Mammary epithelial cell (primary cell): ENCODE measurements at regions of chr4 and their contacts with region 1.

Region 1: DNA sequence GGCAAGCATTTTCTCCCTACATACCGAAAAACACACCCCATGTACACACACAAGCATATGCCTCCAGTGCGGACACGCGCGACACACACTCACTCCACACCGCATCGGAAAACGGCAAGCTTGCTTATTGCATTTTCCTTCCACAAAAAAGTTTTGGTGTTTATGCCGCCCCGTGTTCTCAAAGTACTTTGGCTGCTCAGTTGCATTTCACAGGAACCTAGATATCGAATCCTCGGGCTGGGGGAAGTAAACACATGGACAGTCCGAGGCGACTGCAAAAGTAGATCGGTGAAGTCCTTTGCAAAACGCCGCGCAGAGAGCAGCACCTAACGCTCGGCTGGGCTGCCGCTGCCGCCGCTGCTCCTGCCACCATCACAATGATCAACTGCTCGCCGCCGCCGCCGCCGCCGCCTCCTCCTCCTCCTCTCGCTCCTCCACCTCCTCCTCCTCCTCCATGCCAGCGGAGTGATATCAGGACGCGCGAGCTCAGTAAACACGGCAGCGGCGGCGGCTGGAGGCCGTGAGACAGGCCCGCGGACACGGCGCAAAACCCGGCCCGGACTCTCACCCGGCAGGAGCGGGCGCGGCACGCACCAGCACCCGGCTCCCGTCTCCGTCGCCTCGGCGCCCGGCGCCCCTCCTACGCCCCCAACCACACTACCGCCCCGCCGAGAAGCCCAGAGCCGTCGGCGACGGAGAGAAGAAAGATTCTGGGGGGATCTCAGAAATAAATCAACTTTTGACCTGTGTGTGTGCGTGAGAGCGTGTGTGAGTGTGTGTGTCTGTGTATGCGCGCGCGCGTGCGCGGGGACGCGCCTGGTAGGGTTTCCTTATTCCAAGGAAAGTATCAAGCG is at the start of gene MAML3:
- DNase-seq: peak; percentile 95
- H3K4me3 ChIP-seq: peak within 1 kb of the TSS; percentile 63 to 97 (median 65)
- H3K27ac ChIP-seq: peak within 1 kb of the TSS; percentile 53
- H3K4me1 ChIP-seq: peaks cover 17% of the 10 kb centered on the region
- H3K27me3 ChIP-seq: no peaks in the 10 kb centered on the region
- CTCF ChIP-seq: no peak
- total RNA-seq, gene MAML3: 0.45 to 2.8 TPM

Region 2: GRCh38 chr4:139656614-139657486 is 497.1 kb before region 1 on chr4:
- CTCF ChIA-PET with region 1: interaction called, 4 read pairs
- dilution Hi-C with region 1: no loop called
- in situ Hi-C with region 1: no loop called
- intact Hi-C with region 1: loop called (anchors 5 kb)
- DNase-seq: peak; percentile 73
- H3K4me3 ChIP-seq: peak overlapping the region in 1 of 3 experiments; percentile 14
- H3K27ac ChIP-seq: peak overlapping the region; percentile 75
- H3K4me1 ChIP-seq: peaks cover 28% of the 10 kb centered on the region
- H3K27me3 ChIP-seq: no peaks in the 10 kb centered on the region
- CTCF ChIP-seq: peak; percentile 94 to 96

Region 3: DNA sequence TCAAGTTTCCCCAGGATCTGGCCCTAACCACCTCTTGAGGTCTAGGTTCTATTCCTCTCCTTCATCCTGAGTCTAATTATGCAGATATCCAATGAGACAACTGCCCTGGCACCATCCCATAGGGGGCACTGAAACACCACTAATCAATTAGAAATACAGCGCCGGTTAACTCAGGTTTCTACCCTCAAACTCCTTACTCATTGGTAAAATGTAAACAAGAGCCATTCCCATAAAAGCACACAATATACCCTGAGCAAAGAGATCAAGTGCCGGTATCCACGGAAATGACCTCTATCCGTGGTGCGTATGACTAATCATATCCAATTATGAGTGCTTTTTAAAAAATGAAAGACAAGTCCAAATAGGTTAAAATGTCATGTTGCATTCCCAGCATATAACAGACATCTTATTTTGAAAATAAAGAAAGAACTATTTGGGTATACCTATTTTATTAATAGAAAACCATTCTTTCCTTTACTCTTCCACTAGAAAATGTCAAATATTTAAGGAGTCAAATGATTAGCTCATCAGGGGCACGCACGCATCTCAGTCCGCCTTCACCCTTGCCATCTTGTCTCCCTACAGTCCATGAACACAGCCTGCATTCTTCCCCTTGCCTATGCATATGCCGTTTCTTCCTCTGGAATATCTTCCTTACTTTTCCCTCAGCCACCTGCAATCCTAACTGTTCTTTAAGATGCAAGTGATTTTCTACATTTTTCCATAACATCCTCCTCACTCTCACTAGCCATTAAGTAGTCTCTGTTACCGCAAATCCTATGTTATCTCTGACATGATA is 141.1 kb before region 1 on chr4:
- CTCF ChIA-PET with region 1: no interaction called
- dilution Hi-C with region 1: no loop called
- in situ Hi-C with region 1: no loop called
- intact Hi-C with region 1: loop called (anchors 1 kb)
- DNase-seq: peak; percentile 71
- H3K4me3 ChIP-seq: no peak overlapping the region
- H3K27ac ChIP-seq: no peak overlapping the region
- H3K4me1 ChIP-seq: no peaks in the 10 kb centered on the region
- H3K27me3 ChIP-seq: peaks cover 2% of the 10 kb centered on the region
- CTCF ChIP-seq: peak; percentile 62 to 64

Region 4: DNA sequence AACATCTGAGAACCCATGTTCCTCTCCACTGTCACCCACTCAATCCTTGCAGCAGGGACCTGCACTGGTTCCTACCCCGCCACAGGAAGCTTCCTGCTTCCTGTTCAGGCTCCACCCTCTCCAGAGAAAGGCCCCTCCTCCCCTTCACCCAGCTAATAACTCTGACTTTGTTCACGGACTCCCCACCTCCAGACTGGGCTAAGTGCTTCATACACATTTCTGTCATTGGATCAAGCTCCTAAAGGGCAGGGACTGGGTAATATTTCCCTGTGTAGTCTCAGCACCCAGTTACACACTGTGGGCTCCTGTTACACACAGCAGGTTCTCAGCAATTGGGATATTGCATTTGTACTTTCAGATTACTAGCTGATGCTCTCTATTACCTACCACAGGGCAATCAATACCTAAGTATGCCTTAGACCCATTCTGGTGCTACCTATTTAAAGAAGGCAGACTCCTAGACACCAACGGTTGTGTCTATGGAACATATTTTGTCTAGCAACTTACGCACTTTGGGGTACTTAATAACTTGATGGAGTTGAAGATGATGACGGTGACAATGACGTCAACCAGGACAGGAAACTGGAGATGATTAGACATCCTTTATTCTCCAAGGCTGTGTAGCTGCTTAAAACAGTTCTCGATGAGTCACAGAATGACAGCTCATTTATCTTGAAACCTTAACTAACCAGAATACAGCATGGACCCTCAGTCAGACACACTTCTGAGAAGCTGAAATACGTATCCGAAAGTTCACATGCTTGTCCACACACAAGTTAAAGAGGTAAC is 58.1 kb before region 1 on chr4:
- CTCF ChIA-PET with region 1: no interaction called
- dilution Hi-C with region 1: no loop called
- in situ Hi-C with region 1: no loop called
- intact Hi-C with region 1: loop called (anchors 2 kb)
- DNase-seq: peak; percentile 80
- H3K4me3 ChIP-seq: no peak overlapping the region
- H3K27ac ChIP-seq: no peak overlapping the region
- H3K4me1 ChIP-seq: peaks cover 77% of the 10 kb centered on the region
- H3K27me3 ChIP-seq: no peaks in the 10 kb centered on the region
- CTCF ChIP-seq: no peak

Region 5: GRCh38 chr4:140116442-140117104 is 37.4 kb before region 1 on chr4:
- CTCF ChIA-PET with region 1: no interaction called
- dilution Hi-C with region 1: no loop called
- in situ Hi-C with region 1: no loop called
- intact Hi-C with region 1: no loop called
- DNase-seq: peak; percentile 69
- H3K4me3 ChIP-seq: no peak overlapping the region
- H3K27ac ChIP-seq: no peak overlapping the region
- H3K4me1 ChIP-seq: peaks cover 11% of the 10 kb centered on the region
- H3K27me3 ChIP-seq: no peaks in the 10 kb centered on the region
- CTCF ChIP-seq: no peak

Region 6: GRCh38 chr4:140141210-140141835 is 12.6 kb before region 1 on chr4:
- CTCF ChIA-PET with region 1: no interaction called
- dilution Hi-C with region 1: no loop called
- in situ Hi-C with region 1: no loop called
- intact Hi-C with region 1: no loop called
- DNase-seq: no peak
- H3K4me3 ChIP-seq: no peak overlapping the region
- H3K27ac ChIP-seq: no peak overlapping the region
- H3K4me1 ChIP-seq: peaks cover 4% of the 10 kb centered on the region
- H3K27me3 ChIP-seq: no peaks in the 10 kb centered on the region
- CTCF ChIP-seq: no peak

Region 7: DNA sequence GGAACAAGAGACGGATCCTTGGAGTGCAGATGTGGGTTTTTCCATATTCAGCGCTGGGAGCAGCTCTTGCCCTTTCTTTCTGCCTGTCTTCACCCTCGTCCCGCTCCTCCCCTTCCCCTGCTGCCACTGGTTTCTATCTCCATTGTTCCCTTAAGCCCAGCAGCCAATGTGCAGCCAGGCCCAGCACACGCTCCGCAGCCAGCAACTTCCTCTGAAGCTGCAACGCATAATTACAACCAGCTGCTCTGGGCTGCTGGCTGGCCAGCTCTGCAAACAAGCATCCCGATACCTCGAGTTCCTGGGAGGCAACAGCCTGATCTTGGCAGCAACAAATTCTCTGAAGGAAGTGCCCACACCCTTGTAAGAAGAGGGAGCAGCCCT is 83.7 kb after region 1 on chr4:
- CTCF ChIA-PET with region 1: no interaction called
- dilution Hi-C with region 1: no loop called
- in situ Hi-C with region 1: loop called (anchors 10 kb)
- intact Hi-C with region 1: no loop called
- DNase-seq: no peak
- H3K4me3 ChIP-seq: no peak overlapping the region
- H3K27ac ChIP-seq: no peak overlapping the region
- H3K4me1 ChIP-seq: peaks cover 14% of the 10 kb centered on the region
- H3K27me3 ChIP-seq: no peaks in the 10 kb centered on the region
- CTCF ChIP-seq: no peak

Region 8: DNA sequence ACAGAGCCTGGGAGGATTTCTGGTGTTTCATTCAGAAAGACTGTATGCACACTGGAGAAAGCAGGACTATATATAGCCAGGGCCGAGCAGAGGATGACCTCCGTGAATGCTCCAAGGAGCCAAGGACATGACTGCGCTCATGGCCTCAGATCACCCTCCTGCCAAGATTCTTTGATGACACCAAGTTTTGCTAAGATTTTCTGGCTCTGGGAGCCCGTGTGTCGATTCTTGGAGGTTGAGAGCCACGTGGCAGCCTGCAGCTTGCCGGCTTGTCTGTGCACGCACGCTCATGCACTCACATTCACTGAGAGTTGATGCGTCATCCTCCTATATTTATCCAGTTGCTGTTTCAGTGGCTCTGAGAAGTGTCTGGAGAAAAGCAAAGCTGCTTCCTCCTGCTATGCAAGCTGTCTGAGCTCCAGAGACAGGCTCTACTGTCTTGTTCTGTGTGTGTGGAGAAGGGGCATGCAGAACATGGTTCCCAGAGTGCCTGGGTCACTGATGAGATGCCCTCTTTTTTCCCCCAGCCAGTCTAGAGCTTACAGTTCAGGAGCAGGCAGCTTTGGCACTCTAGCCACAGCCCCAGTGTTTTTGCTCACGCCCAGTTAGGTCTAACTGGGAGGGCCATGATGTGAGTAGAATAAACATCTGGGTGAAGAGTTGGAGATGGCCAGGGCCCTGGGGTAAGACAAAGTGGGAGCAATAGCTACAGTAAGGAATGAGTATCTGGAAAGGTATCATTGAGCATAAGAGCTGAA is 154.6 kb after region 1 on chr4:
- CTCF ChIA-PET with region 1: no interaction called
- dilution Hi-C with region 1: no loop called
- in situ Hi-C with region 1: no loop called
- intact Hi-C with region 1: loop called (anchors 5 kb)
- DNase-seq: peak; percentile 92
- H3K4me3 ChIP-seq: no peak overlapping the region
- H3K27ac ChIP-seq: peak overlapping the region; percentile 14
- H3K4me1 ChIP-seq: peaks cover 19% of the 10 kb centered on the region
- H3K27me3 ChIP-seq: no peaks in the 10 kb centered on the region
- CTCF ChIP-seq: no peak